PC-3 (cell line): ENCODE measurements at regions of chr1 and their contacts with region 1.

Region 1: GRCh38 chr1:201481761-201482493 is 12.9 kb upstream of the PHLDA3 start:
- DNase-seq: peak; percentile 76
- ATAC-seq: peak; percentile 68
- H3K4me3 ChIP-seq: no peak overlapping the region
- H3K27ac ChIP-seq: no peak overlapping the region
- H3K4me1 ChIP-seq: peaks cover 17% of the 10 kb centered on the region
- H3K27me3 ChIP-seq: no peaks in the 10 kb centered on the region
- CTCF ChIP-seq: peak; percentile 85

Region 2: DNA sequence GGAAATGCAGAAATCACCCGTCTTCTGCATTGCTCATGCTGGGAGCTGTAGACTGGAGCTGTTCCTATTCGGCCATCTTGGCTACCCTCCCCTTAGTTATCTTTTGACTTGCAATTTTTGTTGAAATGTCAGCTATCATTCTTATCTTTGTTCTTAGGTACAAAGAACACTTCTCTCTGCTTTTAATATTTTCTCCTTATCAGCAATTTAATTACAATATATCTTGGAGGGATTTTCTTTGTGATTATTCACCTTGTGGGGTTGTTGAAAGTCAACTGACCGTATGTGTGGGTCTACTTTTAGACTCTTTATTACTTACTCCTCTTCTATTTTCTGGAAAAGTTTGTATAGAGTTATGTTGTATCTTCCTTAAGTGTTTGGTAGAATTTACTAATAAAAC is 241.8 kb before region 1 on chr1:
- CTCF ChIA-PET with region 1: no interaction called
- POLR2A ChIA-PET with region 1: no interaction called
- intact Hi-C with region 1: no loop called
- DNase-seq: no peak
- ATAC-seq: no peak
- H3K4me3 ChIP-seq: no peak overlapping the region
- H3K27ac ChIP-seq: no peak overlapping the region
- H3K4me1 ChIP-seq: peaks cover 4% of the 10 kb centered on the region
- H3K27me3 ChIP-seq: peaks cover 49% of the 10 kb centered on the region
- CTCF ChIP-seq: no peak

Region 3: GRCh38 chr1:201408176-201408833 is 73.6 kb before region 1 on chr1:
- CTCF ChIA-PET with region 1: no interaction called
- POLR2A ChIA-PET with region 1: no interaction called
- intact Hi-C with region 1: no loop called
- DNase-seq: peak; percentile 99
- ATAC-seq: peak; percentile 89
- H3K4me3 ChIP-seq: no peak overlapping the region
- H3K27ac ChIP-seq: no peak overlapping the region
- H3K4me1 ChIP-seq: peaks cover 10% of the 10 kb centered on the region; the same call in 1 of the 2 replicates
- H3K27me3 ChIP-seq: no peaks in the 10 kb centered on the region
- CTCF ChIP-seq: peak; percentile 100

Region 4: GRCh38 chr1:201460814-201461657 is 20.9 kb before region 1 on chr1:
- CTCF ChIA-PET with region 1: interaction called, 3 read pairs
- POLR2A ChIA-PET with region 1: interaction called, 7 read pairs
- intact Hi-C with region 1: loop called (anchors 1 kb)
- DNase-seq: peak; percentile 100
- ATAC-seq: peak; percentile 86
- H3K4me3 ChIP-seq: peak overlapping the region; percentile 37
- H3K27ac ChIP-seq: peak overlapping the region; percentile 84
- H3K4me1 ChIP-seq: peaks cover 71% of the 10 kb centered on the region
- H3K27me3 ChIP-seq: no peaks in the 10 kb centered on the region
- CTCF ChIP-seq: no peak

Region 5: GRCh38 chr1:201506556-201507359 is 24.8 kb after region 1 on chr1 and contains the start of gene CSRP1:
- CTCF ChIA-PET with region 1: interaction called, 67 read pairs
- POLR2A ChIA-PET with region 1: interaction called, 11 read pairs
- intact Hi-C with region 1: no loop called
- DNase-seq: peak; percentile 74
- ATAC-seq: peak; percentile 48
- H3K4me3 ChIP-seq: peak within 1 kb of the TSS; percentile 76
- H3K27ac ChIP-seq: peak within 1 kb of the TSS; percentile 89
- H3K4me1 ChIP-seq: peaks cover 80% of the 10 kb centered on the region
- H3K27me3 ChIP-seq: no peaks in the 10 kb centered on the region
- CTCF ChIP-seq: no peak
- total RNA-seq, gene CSRP1: 147 and 189 TPM in 2 replicates

Region 6: DNA sequence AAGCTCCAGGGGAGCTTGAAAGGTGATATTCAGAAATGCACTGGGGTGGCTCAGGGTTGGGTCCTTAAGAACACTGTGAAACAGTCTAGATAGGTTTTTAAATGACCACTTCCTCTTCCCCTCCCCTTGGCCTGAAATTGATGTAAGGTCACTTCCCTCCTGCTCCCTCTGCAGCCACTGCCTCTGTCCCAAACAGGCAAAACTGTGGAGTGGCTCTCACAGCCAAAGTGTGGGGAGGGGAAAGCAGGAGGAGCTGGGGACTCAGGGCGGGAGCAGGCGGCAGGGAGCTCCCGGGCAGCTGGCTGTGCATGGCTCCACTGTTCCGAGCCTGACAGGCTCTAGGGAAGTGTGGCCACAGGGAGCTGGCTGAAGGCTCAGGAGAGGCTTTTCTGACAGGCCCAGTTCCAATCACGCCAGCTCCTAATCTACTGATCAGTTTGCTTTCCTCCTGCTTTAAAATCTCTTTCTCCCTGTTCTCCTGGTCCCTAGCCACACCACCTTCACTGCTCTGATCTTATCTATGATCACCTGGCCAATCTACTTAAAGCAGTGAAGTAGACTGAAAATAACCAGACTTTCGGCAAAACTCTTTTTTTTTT is 30.1 kb after region 1 on chr1:
- CTCF ChIA-PET with region 1: interaction called, 67 read pairs
- POLR2A ChIA-PET with region 1: no interaction called
- intact Hi-C with region 1: loop called (anchors 1 kb)
- DNase-seq: peak; percentile 16
- ATAC-seq: peak; percentile 9
- H3K4me3 ChIP-seq: no peak overlapping the region
- H3K27ac ChIP-seq: peak overlapping the region; percentile 48
- H3K4me1 ChIP-seq: peaks cover 67% of the 10 kb centered on the region
- H3K27me3 ChIP-seq: no peaks in the 10 kb centered on the region
- CTCF ChIP-seq: no peak

Region 7: DNA sequence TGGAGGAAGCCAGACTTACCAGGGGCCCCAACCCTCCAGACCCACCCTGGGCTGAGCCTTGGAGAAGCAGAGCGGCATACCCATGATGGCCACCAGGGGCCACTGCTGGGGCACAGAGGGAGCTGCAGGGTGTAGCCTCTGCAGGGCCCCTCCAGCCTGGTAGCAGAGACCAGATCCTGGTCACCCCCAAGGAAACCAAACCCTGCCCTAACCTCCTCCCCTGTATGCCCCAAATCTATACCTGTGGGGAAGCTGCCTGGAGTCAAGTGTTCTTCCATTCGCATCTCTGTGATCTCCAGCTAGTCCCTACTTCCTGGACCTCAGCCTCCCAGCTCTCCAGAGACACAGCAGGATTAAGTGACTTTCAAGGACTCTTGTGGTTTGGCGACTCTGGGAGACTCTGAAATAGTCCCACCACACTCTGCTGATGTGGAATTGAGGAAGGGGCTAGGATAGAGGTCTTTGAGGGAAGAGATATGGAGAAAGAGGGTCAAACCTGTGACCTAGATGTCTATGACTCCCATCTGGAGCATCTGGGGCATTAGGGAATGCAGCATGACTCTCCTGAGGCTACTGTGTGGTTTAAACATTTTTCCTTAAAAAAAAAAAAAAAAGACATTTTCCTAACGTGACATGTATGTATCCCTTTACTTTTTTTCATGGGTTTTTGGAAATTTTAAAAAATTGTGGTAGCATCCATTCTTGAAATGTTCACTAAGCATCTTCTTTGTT is 227.8 kb after region 1 on chr1:
- CTCF ChIA-PET with region 1: no interaction called
- POLR2A ChIA-PET with region 1: no interaction called
- intact Hi-C with region 1: loop called (anchors 5 kb)
- DNase-seq: peak; percentile 65
- ATAC-seq: peak; percentile 59
- H3K4me3 ChIP-seq: no peak overlapping the region
- H3K27ac ChIP-seq: no peak overlapping the region
- H3K4me1 ChIP-seq: peaks cover 34% of the 10 kb centered on the region
- H3K27me3 ChIP-seq: no peaks in the 10 kb centered on the region
- CTCF ChIP-seq: peak; percentile 72